ENCODE measurements at regions of chr12 and their contacts with region 1.

Region 1: GRCh38 chr12:62813031-62813829 is 121.7 kb downstream of the PPM1H start:
- DNase-seq: no peak
- H3K4me3 ChIP-seq: peak overlapping the region; percentile 21; the same call in 1 of the 2 replicates
- CTCF ChIP-seq: peak; percentile 76

Region 2: GRCh38 chr12:62758216-62758615 is 55.0 kb before region 1 on chr12:
- CTCF ChIA-PET with region 1: no interaction called
- POLR2A ChIA-PET with region 1: no interaction called
- DNase-seq: peak; percentile 57
- H3K4me3 ChIP-seq: no peak overlapping the region
- CTCF ChIP-seq: no peak

Region 3: DNA sequence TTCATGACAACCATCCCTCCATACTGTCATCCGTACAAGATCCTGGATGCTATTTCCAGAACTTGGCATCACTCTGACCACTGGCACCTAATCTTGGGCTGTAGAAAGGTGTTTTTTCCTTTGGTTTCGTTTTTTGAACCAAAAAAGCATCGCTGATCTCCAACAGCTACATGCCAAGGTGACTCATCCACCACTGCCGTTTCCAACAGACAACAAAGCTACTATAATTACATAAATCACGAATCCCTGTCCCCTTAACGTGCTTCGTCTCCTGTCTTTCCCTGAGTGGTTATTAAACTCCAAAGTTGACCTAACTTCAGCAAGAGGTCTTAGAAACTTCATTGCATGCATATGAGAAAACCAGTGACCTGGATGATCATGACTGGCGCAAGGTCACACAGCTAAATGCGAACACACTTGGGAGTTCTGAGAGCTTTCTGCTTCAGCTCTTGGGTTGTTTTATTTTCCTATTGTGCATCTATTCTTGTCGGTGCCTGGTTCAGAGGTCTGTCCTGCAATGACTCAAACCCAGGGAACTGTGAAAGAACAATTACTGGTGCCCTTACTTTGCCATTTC is 21.8 kb after region 1 on chr12:
- CTCF ChIA-PET with region 1: interaction called, 21 read pairs
- POLR2A ChIA-PET with region 1: no interaction called
- DNase-seq: no peak
- H3K4me3 ChIP-seq: no peak overlapping the region
- CTCF ChIP-seq: no peak

Region 4: GRCh38 chr12:62848421-62848820 is 35.2 kb after region 1 on chr12:
- CTCF ChIA-PET with region 1: interaction called, 10 read pairs
- POLR2A ChIA-PET with region 1: no interaction called
- DNase-seq: peak; percentile 28
- H3K4me3 ChIP-seq: no peak overlapping the region
- CTCF ChIP-seq: no peak

Region 5: DNA sequence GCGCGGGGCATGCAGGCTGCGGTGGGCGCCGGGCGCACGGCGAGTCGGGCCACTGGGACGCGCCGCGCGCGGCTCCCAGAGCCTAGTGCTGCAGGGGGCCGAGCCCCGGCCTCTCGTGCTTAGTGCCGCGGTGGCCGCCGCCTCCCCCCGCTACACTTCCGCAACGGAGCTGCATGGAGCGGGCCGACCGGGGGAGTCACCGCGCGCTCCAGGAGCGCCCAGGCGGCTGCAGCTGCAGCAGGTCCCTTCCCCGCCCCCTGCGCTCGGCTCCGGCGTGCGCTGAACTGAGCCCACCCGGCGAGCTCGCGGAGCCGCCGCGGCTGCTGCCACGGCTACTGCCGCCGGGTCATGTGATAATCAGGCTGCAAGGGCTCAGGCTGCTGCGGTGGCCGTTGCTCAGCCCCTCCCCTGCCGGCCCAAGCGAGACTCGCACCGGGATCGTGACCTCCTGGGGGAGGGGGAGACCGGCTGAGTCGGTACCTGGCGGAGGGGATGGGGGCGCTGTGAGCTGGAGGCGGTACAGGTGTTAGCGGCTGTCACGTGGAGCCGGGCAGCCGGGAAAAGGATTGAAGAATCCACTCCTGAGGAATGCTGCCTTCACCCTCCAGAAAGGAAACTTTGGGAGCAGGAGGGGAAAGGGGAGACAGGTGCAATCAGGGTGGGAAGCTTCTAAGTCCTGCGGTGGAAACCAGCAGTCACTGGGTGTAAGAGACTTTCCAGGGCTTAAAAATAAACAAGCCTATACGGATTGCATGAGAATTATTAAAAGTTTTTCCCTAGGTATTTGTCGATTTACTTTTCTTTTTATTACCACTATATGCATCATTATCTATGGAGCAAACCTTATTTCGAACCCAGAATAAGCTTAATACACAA is 121.8 kb after region 1 on chr12 and contains the start of gene PPM1H:
- CTCF ChIA-PET with region 1: interaction called, 38 read pairs
- POLR2A ChIA-PET with region 1: interaction called, 3 read pairs
- DNase-seq: no peak
- H3K4me3 ChIP-seq: peak within 1 kb of the TSS; percentile 71
- CTCF ChIP-seq: no peak

Measured in AG04449 (cell line).